MCF 10A (cell line): ENCODE measurements at regions of chr9 and their contacts with region 1.

Region 1: GRCh38 chr9:115694014-115694413 is 459.6 kb upstream of the PAPPA start:
- DNase-seq: peak; percentile 95
- H3K4me3 Mint-ChIP-seq: no peak overlapping the region
- H3K27ac Mint-ChIP-seq: peak overlapping the region; percentile 44
- H3K4me1 Mint-ChIP-seq: peaks cover 32% of the 10 kb centered on the region
- H3K27me3 Mint-ChIP-seq: no peaks in the 10 kb centered on the region
- CTCF ChIP-seq: peak; percentile 51

Region 2: GRCh38 chr9:115615821-115616665 is 78.0 kb before region 1 on chr9:
- CTCF ChIA-PET with region 1: no interaction called
- POLR2A ChIA-PET with region 1: no interaction called
- intact Hi-C with region 1: loop called (anchors 2 kb)
- DNase-seq: peak; percentile 79
- H3K4me3 Mint-ChIP-seq: no peak overlapping the region
- H3K27ac Mint-ChIP-seq: peak overlapping the region; percentile 61
- H3K4me1 Mint-ChIP-seq: peaks cover 25% of the 10 kb centered on the region
- H3K27me3 Mint-ChIP-seq: no peaks in the 10 kb centered on the region
- CTCF ChIP-seq: no peak

Region 3: GRCh38 chr9:115672477-115673316 is 21.3 kb before region 1 on chr9:
- CTCF ChIA-PET with region 1: interaction called, 4 read pairs
- POLR2A ChIA-PET with region 1: interaction called, 4 read pairs
- intact Hi-C with region 1: loop called (anchors 1 kb)
- DNase-seq: peak; percentile 91
- H3K4me3 Mint-ChIP-seq: no peak overlapping the region
- H3K27ac Mint-ChIP-seq: peak overlapping the region; percentile 99
- H3K4me1 Mint-ChIP-seq: peaks cover 52% of the 10 kb centered on the region
- H3K27me3 Mint-ChIP-seq: no peaks in the 10 kb centered on the region
- CTCF ChIP-seq: no peak

Region 4: DNA sequence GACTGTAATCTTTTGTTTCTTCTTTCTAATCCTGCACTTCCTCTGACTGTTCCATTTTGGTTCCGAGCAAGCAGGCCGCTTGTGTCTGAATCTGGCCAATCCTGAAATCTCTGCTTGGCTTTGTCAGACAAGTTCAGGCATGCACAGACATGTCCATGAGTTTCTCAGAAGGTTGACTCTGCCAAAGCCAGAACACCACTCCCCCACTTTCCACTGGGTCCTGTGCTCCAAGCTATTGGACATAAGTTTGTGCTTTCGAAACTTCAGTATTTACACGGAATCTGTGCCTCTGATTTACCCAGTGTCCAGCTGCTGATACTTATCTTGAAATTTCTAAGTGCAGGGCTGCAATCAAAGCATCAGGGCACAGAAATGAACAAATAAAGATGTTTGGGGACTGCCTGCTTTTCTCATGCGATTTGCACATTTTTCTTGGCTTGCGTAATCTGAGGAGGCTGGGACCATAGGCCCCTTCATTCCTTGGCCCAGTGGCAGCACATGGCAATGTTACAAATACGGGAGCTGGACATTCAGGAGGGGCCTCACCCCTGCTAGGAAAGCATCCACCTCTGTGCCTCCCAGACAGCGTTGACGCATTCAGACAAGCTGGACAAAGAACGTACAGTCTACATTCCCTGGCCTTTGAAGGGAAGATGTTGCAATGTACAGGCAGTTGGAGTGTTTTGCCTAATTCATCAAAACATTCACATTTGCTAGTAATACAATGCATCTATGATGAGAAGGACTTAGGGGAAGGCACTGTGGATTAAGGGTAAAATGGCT is 250.3 kb after region 1 on chr9:
- CTCF ChIA-PET with region 1: no interaction called
- POLR2A ChIA-PET with region 1: interaction called, 3 read pairs
- intact Hi-C with region 1: loop called (anchors 2 kb)
- DNase-seq: peak; percentile 99
- H3K4me3 Mint-ChIP-seq: peak overlapping the region; percentile 60
- H3K27ac Mint-ChIP-seq: peak overlapping the region; percentile 100
- H3K4me1 Mint-ChIP-seq: peaks cover 71% of the 10 kb centered on the region
- H3K27me3 Mint-ChIP-seq: no peaks in the 10 kb centered on the region
- CTCF ChIP-seq: no peak

Region 5: DNA sequence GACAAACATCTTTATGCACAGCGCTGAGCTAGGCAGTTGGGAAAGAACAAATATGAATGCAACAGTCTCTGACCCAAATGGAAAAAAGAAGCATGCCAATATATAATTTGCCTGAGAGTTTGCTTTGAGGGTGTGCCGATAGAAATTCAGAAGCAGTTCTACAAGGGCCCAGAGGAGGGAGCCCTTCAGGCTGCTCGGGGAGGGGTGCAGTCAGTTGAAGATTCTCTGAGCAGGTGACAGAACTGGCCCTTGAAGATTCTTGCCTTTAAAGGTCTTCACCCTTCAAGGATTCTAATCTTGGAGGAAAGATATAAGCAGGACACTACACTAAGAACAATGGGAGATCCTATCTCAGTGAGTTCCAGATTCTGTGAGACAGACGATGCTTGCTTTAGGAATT is 455.8 kb after region 1 on chr9:
- CTCF ChIA-PET with region 1: interaction called, 5 read pairs
- POLR2A ChIA-PET with region 1: no interaction called
- intact Hi-C with region 1: loop called (anchors 2 kb)
- DNase-seq: peak; percentile 51
- H3K4me3 Mint-ChIP-seq: no peak overlapping the region
- H3K27ac Mint-ChIP-seq: no peak overlapping the region
- H3K4me1 Mint-ChIP-seq: peaks cover 24% of the 10 kb centered on the region
- H3K27me3 Mint-ChIP-seq: no peaks in the 10 kb centered on the region
- CTCF ChIP-seq: peak; percentile 47

Region 6: DNA sequence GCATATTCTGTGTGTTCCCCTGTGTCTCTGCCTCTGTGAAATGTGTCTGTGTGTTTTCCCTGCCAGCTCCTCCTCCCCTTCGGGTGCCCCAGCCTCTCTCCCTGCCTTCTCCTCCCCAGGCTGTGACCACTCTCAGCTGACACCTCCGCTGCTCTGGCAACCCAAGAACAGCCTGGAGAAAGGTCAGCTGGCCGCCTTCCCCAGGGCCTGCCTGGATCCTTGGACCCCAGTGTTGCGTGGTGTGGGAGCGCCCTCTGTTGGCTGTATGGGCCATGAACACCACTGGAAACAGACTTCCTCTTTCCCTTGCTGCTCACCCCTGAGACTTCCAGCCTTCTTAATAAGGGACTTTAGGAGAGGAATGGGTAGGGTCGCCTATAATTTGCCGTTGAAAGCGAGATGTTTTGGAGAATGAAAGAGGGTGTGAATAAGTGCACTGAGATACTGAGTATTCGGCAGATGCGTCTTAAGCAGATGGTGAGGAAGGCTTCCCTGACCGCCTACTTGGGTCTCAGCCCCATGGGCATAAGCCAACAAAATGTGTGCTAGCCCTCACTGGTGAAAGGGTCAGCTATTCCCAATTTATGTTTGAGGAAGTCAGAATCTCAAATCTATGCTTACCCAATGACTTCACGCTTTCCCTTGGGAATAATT is 878.2 kb after region 1 on chr9:
- CTCF ChIA-PET with region 1: interaction called, 7 read pairs
- POLR2A ChIA-PET with region 1: no interaction called
- intact Hi-C with region 1: loop called (anchors 1 kb)
- DNase-seq: peak; percentile 80
- H3K4me3 Mint-ChIP-seq: no peak overlapping the region
- H3K27ac Mint-ChIP-seq: no peak overlapping the region
- H3K4me1 Mint-ChIP-seq: peaks cover 4% of the 10 kb centered on the region
- H3K27me3 Mint-ChIP-seq: no peaks in the 10 kb centered on the region
- CTCF ChIP-seq: peak; percentile 95

Region 7: GRCh38 chr9:116661037-116661954 is 967.3 kb after region 1 on chr9:
- CTCF ChIA-PET with region 1: no interaction called
- POLR2A ChIA-PET with region 1: no interaction called
- intact Hi-C with region 1: loop called (anchors 2 kb)
- DNase-seq: peak; percentile 73
- H3K4me3 Mint-ChIP-seq: no peak overlapping the region
- H3K27ac Mint-ChIP-seq: no peak overlapping the region
- H3K4me1 Mint-ChIP-seq: peaks cover 9% of the 10 kb centered on the region
- H3K27me3 Mint-ChIP-seq: no peaks in the 10 kb centered on the region
- CTCF ChIP-seq: peak; percentile 76